Astrocyte of the cerebellum (primary cell): ENCODE measurements at regions of chr5 and their contacts with region 1.

Region 1: GRCh38 chr5:147391781-147392180 is 118.1 kb downstream of the DPYSL3 start:
- DNase-seq: peak; percentile 34
- H3K4me3 ChIP-seq: no peak overlapping the region
- CTCF ChIP-seq: peak; percentile 73

Region 2: DNA sequence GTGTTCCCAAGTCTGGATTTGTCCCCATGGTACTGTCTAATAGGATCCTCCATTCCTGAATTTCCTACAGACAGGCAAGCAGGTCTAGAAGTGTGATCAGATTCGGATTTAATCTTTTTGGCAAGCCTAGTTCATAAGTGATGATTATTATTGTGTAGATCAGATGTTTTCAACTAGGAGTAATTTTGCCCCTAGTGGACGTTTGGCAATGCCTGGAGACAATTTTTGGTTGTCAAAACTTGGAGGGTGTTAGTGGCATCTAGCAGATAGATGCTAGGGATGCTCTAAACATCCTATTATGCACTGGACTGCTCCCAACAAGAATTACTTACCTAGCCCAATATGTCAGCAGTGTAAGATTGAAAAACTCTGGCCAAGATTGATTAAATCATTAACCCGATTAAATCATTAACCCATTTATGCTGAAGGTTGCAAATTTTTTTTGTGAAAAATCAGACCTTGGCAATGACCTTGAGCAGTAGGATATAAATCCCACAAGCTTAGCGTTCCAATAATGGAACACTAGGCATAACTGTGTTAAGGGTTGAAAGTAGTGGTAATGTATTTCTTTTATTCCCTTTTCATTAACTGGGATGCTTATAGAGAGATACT is 916.5 kb before region 1 on chr5:
- in situ Hi-C with region 1: loop called (anchors 25 kb)
- DNase-seq: no peak
- H3K4me3 ChIP-seq: no peak overlapping the region
- CTCF ChIP-seq: peak; percentile 36

Region 3: GRCh38 chr5:147359581-147359980 is 32.2 kb before region 1 on chr5:
- in situ Hi-C with region 1: no loop called
- DNase-seq: no peak
- H3K4me3 ChIP-seq: no peak overlapping the region
- CTCF ChIP-seq: no peak